Activated B cell treated with CpG ODN at 0.5 μM for 24 hours (primary cell): ENCODE measurements at regions of chr13 and their contacts with region 1.

Region 1: DNA sequence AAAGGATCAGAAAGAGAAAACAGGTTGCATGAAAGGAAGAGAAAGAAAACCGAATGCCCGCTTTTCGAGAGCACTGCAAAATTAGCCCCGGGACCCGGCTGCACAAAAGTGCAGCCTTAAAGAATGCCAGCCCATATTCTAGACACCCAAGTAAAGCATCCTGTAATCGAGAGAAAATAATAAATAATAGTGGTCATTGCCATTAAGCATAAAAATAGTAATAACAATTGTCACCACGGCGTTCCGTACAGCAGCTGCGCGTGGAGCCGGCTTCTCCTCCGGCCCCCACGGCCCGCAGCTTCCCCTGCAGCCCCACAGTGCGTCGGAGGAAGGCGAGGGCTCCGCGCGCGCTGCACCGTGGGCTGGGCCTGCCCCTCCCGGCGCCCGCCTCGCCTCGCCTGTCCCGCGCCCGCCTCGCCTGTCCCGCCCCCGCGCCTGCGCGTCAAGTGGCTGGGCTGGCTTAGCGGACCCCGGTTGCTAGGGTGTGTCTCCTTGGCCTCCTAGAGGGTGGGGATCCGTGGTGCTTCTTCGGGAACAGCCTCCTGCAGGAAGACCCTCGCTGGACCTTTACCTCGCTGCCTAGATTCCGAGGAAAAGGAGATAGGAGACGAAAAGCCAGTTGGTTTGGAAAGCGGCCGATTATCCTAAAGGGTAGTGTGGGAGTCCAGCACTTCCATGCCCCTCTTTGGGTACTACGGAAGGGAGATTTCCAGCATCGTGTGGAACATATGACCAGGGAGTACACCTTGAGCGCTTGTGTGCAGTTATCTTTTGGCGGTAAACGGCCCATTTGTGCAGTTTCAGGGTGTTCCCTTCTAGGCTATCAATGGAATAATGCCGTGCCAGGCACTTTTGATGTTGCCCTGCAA is at the start of gene LRRC63:
- DNase-seq: peak; percentile 73
- ATAC-seq: peak; percentile 99
- H3K4me3 Mint-ChIP-seq: peak within 1 kb of the TSS; percentile 78
- H3K27ac Mint-ChIP-seq: peak within 1 kb of the TSS; percentile 21
- H3K4me1 Mint-ChIP-seq: peaks cover 22% of the 10 kb centered on the region
- H3K27me3 Mint-ChIP-seq: no peaks in the 10 kb centered on the region
- CTCF ChIP-seq: no peak
- total RNA-seq, gene LRRC63: 0.10 TPM in 1 of 2 replicates, not detected in the other

Region 2: GRCh38 chr13:46195016-46195415 is 16.7 kb before region 1 on chr13:
- CTCF ChIA-PET with region 1: no interaction called
- POLR2A ChIA-PET with region 1: no interaction called
- intact Hi-C with region 1: loop called (anchors 2 kb)
- DNase-seq: no peak
- ATAC-seq: no peak
- H3K4me3 Mint-ChIP-seq: no peak overlapping the region
- H3K27ac Mint-ChIP-seq: no peak overlapping the region
- H3K4me1 Mint-ChIP-seq: peaks cover 6% of the 10 kb centered on the region
- H3K27me3 Mint-ChIP-seq: no peaks in the 10 kb centered on the region
- CTCF ChIP-seq: no peak

Region 3: GRCh38 chr13:46498650-46499049 is 286.9 kb after region 1 on chr13:
- CTCF ChIA-PET with region 1: no interaction called
- POLR2A ChIA-PET with region 1: no interaction called
- intact Hi-C with region 1: no loop called
- DNase-seq: no peak
- ATAC-seq: no peak
- H3K4me3 Mint-ChIP-seq: no peak overlapping the region
- H3K27ac Mint-ChIP-seq: no peak overlapping the region
- H3K4me1 Mint-ChIP-seq: no peaks in the 10 kb centered on the region
- H3K27me3 Mint-ChIP-seq: peaks cover 2% of the 10 kb centered on the region
- CTCF ChIP-seq: no peak

Region 4: DNA sequence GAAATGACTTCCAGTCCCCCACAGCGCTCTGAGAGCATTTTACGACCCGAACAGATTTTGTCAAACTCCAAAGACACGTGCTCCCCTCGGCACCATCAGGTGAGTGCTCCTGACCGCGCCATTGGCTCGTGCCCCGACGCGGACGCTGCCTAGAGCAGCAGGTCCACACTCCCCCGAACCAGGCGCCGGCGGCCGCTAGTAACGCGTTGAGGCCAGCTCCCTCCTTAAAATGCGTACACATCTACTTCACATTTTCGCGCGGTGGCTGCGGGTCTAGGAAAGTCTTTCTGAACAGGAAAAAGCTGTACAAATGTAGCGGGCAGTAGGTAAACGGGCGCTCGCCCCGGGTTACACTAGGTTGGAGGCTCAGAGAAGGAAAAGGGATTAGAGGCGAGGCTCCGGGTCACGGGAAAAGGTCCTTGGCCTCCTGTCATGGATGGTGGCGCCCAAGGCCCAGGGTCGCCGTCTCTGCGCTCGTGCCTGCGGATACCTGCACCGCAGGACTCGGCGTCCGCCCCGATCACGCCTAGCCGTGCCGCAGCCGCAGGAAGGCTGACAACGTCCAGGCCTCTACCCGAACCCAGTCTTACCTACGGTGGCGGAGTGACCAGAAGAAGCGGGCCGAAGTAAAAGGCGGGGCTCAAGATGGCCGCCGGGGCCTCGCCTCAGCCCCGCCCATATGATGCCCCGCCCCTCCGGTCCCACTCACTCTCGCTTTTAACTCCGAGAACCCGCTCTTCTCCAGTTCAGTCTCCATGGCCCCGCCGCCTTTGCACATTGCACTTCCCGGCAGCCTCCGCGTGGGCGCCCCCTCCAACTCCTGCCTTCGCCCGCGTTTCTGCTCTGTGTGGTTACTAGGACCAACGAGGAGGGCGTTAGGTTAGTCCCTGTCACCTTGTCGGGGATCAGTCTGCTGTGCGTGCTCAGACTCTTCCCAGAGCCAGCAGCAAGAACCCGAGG is 585.1 kb after region 1 on chr13 and contains the start of gene ESD:
- CTCF ChIA-PET with region 1: no interaction called
- POLR2A ChIA-PET with region 1: no interaction called
- intact Hi-C with region 1: loop called (anchors 10 kb)
- DNase-seq: peak; percentile 86
- ATAC-seq: peak; percentile 95
- H3K4me3 Mint-ChIP-seq: peak within 1 kb of the TSS; percentile 97
- H3K27ac Mint-ChIP-seq: peak within 1 kb of the TSS; percentile 96
- H3K4me1 Mint-ChIP-seq: peaks cover 38% of the 10 kb centered on the region
- H3K27me3 Mint-ChIP-seq: no peaks in the 10 kb centered on the region
- CTCF ChIP-seq: no peak
- total RNA-seq, gene ESD: 73.5 and 74.2 TPM in 2 replicates